ENCODE measurements at regions of chr18 and their contacts with region 1.

Region 1: GRCh38 chr18:11040823-11041656 is 108.3 kb downstream of the PIEZO2 start:
- DNase-seq: peak; percentile 50
- CTCF ChIP-seq: peak; percentile 67

Region 2: DNA sequence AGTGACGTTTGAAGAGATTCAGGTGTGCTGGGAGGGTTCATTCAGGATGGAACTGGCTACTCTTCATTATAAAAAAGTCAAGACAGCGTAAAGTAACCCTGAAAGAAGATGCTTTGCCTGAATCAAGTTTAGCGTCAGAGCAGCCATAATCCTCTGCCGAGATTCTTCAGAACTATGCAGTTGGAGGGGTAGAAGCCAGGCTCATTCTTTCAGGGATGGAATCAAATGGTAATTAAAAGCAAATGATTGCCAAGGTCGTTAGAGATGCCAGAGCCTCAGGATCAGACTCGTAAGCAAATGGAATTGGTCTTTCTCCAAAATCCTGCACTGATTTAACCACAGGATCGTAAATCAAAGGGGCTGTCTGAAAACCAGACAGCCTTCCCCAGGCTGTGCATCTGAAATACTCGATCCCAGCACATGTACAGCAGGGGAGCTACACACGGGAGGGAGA is 564.7 kb before region 1 on chr18:
- in situ Hi-C with region 1: no loop called
- DNase-seq: no peak
- CTCF ChIP-seq: no peak

Region 3: GRCh38 chr18:10841203-10841602 is 199.8 kb before region 1 on chr18:
- in situ Hi-C with region 1: loop called (anchors 10 kb)
- DNase-seq: no peak
- CTCF ChIP-seq: no peak